CD14-positive monocyte (primary cell): ENCODE measurements at regions of chr11 and their contacts with region 1.

Region 1: GRCh38 chr11:70270104-70270876 is at the start of gene PPFIA1:
- DNase-seq: peak; percentile 92 to 93 (median 92)
- H3K4me3 ChIP-seq: peak within 1 kb of the TSS; percentile 86 to 97 (median 88)
- H3K4me3 Mint-ChIP-seq: peak within 1 kb of the TSS; percentile 92 to 95
- H3K27ac ChIP-seq: peak within 1 kb of the TSS; percentile 44 to 81
- H3K27ac Mint-ChIP-seq: peak within 1 kb of the TSS; percentile 64 to 94 (median 85)
- H3K4me1 ChIP-seq: peaks cover 20 to 28% of the 10 kb centered on the region in 2 donors
- H3K4me1 Mint-ChIP-seq: peaks cover 24% of the 10 kb centered on the region
- H3K27me3 ChIP-seq: peaks cover 4 to 11% of the 10 kb centered on the region in 2 donors
- H3K27me3 Mint-ChIP-seq: peaks cover 27 to 39% (median 36%) of the 10 kb centered on the region in 3 donors
- CTCF ChIP-seq: no peak
- polyA plus RNA-seq, gene PPFIA1: 7.5 to 65.7 (median 15.5) TPM

Region 2: DNA sequence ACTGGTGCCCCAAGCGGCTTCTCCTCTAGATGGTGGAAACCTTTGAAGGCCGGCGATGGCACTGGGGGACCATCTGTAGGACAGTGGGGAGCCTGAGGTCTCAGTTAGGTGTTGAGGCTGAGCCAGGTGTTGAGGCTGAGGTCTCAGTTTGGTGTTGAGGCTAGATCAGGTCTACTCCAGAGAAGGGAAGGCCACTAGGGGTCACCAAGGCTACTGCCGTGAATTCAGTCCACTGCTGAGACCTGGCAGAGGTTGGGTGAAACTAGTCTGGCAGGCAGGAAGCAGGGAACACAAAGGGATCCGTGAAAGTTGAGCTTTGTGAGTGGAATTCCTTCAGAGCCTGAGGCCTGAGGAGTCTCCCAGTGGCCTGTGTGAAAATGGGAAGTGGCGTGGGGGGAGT is 327.2 kb before region 1 on chr11:
- intact Hi-C with region 1: no loop called
- DNase-seq: no peak
- H3K4me3 ChIP-seq: no peak overlapping the region
- H3K4me3 Mint-ChIP-seq: no peak overlapping the region
- H3K27ac ChIP-seq: no peak overlapping the region
- H3K27ac Mint-ChIP-seq: no peak overlapping the region
- H3K4me1 ChIP-seq: no peaks in the 10 kb centered on the region
- H3K4me1 Mint-ChIP-seq: no peaks in the 10 kb centered on the region
- H3K27me3 ChIP-seq: no peaks in the 10 kb centered on the region
- H3K27me3 Mint-ChIP-seq: peaks cover 0 to 5% (median 4%) of the 10 kb centered on the region in 3 donors
- CTCF ChIP-seq: no peak

Region 3: DNA sequence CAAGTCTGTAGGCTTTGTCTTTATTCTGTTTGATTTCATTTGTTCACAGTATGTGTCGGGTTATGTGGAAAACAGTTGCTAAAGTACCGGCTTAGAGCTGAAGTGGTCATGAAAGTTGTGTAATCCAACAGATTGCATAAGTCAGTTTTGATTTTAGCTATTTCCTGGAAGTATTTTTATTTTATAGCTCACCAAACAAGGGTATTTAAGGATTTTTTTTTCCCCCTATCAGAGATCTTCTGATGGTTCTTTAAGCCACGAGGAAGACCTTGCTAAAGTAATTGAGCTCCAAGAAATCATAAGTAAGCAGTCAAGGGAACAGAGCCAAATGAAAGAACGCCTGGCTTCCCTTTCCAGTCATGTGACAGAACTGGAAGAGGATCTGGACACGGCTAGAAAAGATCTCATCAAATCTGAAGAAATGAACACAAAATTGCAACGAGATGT is 56.1 kb after region 1 on chr11:
- intact Hi-C with region 1: loop called in 1 of 2 experiments (anchors 2 kb)
- DNase-seq: peak; percentile 80 to 90 (median 88)
- H3K4me3 ChIP-seq: peak overlapping the region; percentile 32 to 67 (median 57)
- H3K4me3 Mint-ChIP-seq: peak overlapping the region; percentile 65 to 88
- H3K27ac ChIP-seq: peak overlapping the region; percentile 89
- H3K27ac Mint-ChIP-seq: peak overlapping the region; percentile 93 to 97 (median 97)
- H3K4me1 ChIP-seq: peaks cover 62% of the 10 kb centered on the region in 2 donors
- H3K4me1 Mint-ChIP-seq: peaks cover 62% of the 10 kb centered on the region
- H3K27me3 ChIP-seq: no peaks in the 10 kb centered on the region
- H3K27me3 Mint-ChIP-seq: peaks cover 0 to 4% (median 0%) of the 10 kb centered on the region in 3 donors
- CTCF ChIP-seq: no peak